Endothelial cell of umbilical vein (primary cell): ENCODE measurements at regions of chr17 and their contacts with region 1.

Region 1: DNA sequence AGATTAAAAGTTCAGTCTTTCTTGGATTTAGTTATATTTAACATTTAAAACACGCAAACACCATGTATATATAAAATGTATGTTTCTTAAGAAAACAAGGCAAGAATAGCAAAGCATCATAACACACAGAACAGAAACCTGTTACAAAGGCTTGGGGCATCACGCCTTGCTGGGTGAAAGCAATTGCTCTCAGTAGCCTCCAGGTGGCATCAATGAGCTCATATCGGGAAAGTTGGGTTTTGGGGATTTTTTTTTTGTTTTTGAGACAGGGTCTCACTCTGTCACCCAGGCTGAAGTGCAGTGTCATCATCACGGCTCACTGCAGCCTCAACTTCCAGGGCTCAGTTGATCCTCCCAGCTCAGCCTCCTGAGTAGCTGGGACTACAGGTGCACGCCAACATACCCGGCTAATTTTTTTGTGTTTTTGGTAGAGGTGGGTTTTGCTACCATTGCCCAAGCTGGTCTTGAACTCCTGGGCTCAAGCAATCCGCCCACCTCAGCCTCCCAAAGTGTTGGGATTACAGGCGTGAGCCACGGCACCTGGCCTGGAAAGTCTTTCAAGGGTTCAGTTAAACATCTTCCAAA is 56.9 kb downstream of the CYB5D2 start:
- DNase-seq: peak; percentile 45
- H3K4me3 ChIP-seq: no peak overlapping the region
- H3K27ac ChIP-seq: no peak overlapping the region
- H3K4me1 ChIP-seq: no peaks in the 10 kb centered on the region
- H3K27me3 ChIP-seq: no peaks in the 10 kb centered on the region
- CTCF ChIP-seq: peak; percentile 69 to 70
- POLR2A ChIP-seq: no peak

Region 2: GRCh38 chr17:4187076-4187475 is 12.8 kb before region 1 on chr17:
- CTCF ChIA-PET with region 1: interaction called, 42 read pairs
- POLR2A ChIA-PET with region 1: no interaction called
- dilution Hi-C with region 1: no loop called
- intact Hi-C with region 1: no loop called
- DNase-seq: no peak
- H3K4me3 ChIP-seq: no peak overlapping the region
- H3K27ac ChIP-seq: no peak overlapping the region
- H3K4me1 ChIP-seq: peaks cover 13% of the 10 kb centered on the region
- H3K27me3 ChIP-seq: no peaks in the 10 kb centered on the region
- CTCF ChIP-seq: no peak
- POLR2A ChIP-seq: no peak

Region 3: GRCh38 chr17:4407851-4408250 is 207.9 kb after region 1 on chr17:
- CTCF ChIA-PET with region 1: interaction called, 160 read pairs
- POLR2A ChIA-PET with region 1: no interaction called
- dilution Hi-C with region 1: no loop called
- intact Hi-C with region 1: loop called (anchors 1 kb)
- DNase-seq: no peak
- H3K4me3 ChIP-seq: no peak overlapping the region
- H3K27ac ChIP-seq: no peak overlapping the region
- H3K4me1 ChIP-seq: no peaks in the 10 kb centered on the region
- H3K27me3 ChIP-seq: no peaks in the 10 kb centered on the region
- CTCF ChIP-seq: no peak
- POLR2A ChIP-seq: no peak

Region 4: DNA sequence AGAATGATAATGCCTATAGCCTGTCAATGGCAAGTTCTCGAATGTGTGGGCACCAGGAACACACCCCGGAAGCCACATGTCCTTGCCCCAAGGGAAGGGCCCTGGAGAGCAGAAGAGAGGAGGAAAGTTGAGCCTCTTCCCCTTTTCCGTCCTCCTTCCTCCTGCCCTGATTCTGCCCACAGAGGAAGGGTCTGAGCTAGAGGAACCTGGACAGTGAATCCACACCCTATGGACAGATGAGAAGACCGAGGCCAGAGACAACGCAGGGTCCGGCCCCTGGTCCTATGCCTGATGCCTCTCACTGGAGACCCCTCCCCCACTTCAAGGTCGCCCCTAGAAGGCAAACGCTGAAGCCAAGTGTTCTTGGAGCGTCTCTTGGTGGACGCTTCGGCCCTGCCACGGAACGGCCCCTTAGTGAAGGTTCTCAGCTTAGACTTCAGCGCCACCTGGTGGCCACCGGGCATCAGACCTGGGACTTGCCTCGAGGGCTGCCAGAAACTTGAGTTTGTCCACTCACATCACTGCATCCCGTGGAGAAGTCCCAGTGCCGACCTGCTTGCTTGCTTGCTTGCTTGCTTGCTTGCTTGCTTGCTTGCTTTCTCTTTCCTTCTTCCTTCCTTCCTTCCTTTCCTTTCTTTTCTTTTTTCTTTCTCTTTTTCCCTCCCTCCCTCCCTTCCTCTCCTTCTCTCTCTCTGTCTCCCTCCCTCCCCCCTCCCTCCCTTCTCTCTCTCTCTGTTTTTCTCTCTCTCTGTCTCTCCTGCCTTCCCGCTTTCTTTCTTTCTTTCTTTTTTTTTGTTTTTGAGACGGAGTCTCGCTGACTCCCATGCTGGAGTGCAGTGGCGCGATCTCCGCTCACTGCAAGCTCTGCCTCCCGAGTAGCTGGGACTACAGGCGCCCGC is 213.3 kb after region 1 on chr17:
- CTCF ChIA-PET with region 1: interaction called, 160 read pairs
- POLR2A ChIA-PET with region 1: no interaction called
- dilution Hi-C with region 1: no loop called
- intact Hi-C with region 1: loop called (anchors 1 kb)
- DNase-seq: peak; percentile 85
- H3K4me3 ChIP-seq: no peak overlapping the region
- H3K27ac ChIP-seq: no peak overlapping the region
- H3K4me1 ChIP-seq: no peaks in the 10 kb centered on the region
- H3K27me3 ChIP-seq: no peaks in the 10 kb centered on the region
- CTCF ChIP-seq: peak; percentile 84 to 95
- POLR2A ChIP-seq: no peak